ENCODE measurements at regions of chr14 and their contacts with region 1.

Region 1: GRCh38 chr14:94921882-94922585 is 152.1 kb upstream of the GSC start:
- DNase-seq: no peak
- H3K4me3 ChIP-seq: no peak overlapping the region
- H3K27ac ChIP-seq: peak overlapping the region in 1 of 4 donors; percentile 19
- H3K4me1 ChIP-seq: no peaks in the 10 kb centered on the region
- H3K27me3 ChIP-seq: no peaks in the 10 kb centered on the region
- CTCF ChIP-seq: no peak
- EP300 ChIP-seq: no peak
- POLR2A ChIP-seq: no peak

Region 2: DNA sequence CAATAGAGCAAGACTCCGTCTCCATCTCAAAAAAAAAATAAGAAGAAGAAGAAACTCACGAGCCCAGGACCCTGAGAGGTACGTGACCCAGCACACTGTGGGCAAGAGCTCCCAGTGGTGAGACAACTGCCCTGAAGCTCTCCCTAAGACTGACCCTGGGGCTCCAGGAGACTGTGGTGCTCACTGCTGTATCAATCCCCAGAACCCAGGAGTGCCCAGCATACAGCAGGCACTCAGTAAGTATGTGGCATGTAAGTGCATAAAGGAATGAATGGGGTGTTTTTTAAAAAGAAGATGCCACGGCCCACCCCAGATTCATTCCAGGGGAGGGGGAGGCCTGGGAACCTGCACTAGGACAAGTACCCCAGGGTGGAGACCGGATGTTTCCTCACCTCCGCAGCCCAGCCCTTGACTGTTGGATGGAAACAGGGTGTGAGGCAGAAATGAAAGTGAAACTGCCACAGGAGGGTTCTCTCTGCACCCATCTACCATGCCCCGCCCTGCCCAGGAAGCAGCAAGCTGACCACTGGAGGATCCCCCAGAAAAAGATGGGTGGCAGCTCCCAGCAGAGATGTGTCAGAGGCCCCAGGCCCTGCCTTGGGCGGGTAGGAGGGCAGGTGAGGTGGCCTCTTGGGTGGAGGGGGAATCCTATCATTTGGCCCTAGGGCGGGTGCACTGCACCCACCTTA is 1818.5 kb before region 1 on chr14:
- in situ Hi-C with region 1: no loop called
- intact Hi-C with region 1: loop called (anchors 5 kb)
- DNase-seq: peak; percentile 83
- H3K4me3 ChIP-seq: peak overlapping the region in 1 of 4 donors; percentile 5
- H3K27ac ChIP-seq: peak overlapping the region; percentile 27 to 69 (median 55)
- H3K4me1 ChIP-seq: peaks cover 25 to 67% (median 40%) of the 10 kb centered on the region in 4 donors
- H3K27me3 ChIP-seq: no peaks in the 10 kb centered on the region
- CTCF ChIP-seq: no peak
- EP300 ChIP-seq: no peak
- POLR2A ChIP-seq: no peak

Region 3: DNA sequence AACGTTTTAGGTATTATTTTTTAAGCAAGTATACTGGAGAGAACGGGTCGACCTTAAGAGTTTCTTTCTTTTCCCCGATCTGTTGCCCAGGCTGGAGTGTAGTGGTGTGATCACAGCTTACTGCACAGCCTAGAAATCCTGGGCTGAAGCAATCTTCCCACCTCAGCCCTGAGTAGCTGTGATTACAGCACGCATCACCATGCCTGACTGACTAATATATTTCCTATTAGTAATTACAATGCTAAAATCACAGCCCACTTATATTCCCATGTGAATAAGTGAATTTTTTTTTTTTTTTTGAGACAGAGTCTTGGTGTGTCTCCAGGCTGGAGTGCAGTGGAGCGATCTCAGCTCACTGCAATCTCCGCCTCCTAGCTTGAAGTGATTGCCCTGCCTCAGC is 184.9 kb after region 1 on chr14:
- in situ Hi-C with region 1: no loop called
- intact Hi-C with region 1: loop called (anchors 10 kb)
- DNase-seq: no peak
- H3K4me3 ChIP-seq: no peak overlapping the region
- H3K27ac ChIP-seq: no peak overlapping the region
- H3K4me1 ChIP-seq: no peaks in the 10 kb centered on the region
- H3K27me3 ChIP-seq: no peaks in the 10 kb centered on the region
- CTCF ChIP-seq: no peak
- EP300 ChIP-seq: no peak
- POLR2A ChIP-seq: no peak

Measured in transverse colon (tissue), 4 donors.